Lower leg skin (tissue), 4 donors: ENCODE measurements at regions of chr1 and their contacts with region 1.

Region 1: DNA sequence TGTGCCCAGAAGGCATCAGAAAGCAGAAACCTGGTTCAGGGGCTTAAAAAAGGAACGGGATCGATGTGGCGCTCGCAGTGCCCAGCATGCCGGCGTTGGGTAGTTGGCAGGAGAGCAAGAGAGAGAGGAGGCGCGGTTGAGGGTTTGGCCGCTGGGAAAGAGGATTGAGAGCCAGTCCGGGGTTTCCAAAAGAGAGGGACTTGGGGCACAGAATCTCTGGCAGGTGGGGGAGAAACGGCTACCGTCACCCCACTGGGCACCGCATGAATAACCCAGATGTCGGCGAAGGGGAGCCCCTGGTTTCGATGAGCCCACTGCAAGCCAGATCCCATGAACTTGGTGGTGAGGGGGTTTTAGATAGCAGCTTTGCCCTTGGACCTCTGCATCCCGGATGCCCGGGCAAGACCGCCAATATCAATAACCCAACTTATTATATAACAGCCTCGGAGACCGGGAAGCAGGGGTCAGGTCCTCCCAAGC is 60.4 kb upstream of the ACOT11 start:
- DNase-seq: peak in 1 of 2 donors; percentile 90
- H3K4me3 ChIP-seq: no peak overlapping the region
- CTCF ChIP-seq: no peak
- POLR2A ChIP-seq: no peak

Region 2: GRCh38 chr1:54121482-54122134 is 366.0 kb before region 1 on chr1:
- intact Hi-C with region 1: loop called (anchors 5 kb)
- DNase-seq: peak; percentile 59 to 96
- H3K4me3 ChIP-seq: no peak overlapping the region
- CTCF ChIP-seq: peak in 1 of 3 donors; percentile 36
- POLR2A ChIP-seq: no peak

Region 3: GRCh38 chr1:54407404-54408146 is 80.0 kb before region 1 on chr1:
- intact Hi-C with region 1: loop called (anchors 1 kb)
- DNase-seq: peak; percentile 86 to 89
- H3K4me3 ChIP-seq: peak overlapping the region; percentile 88
- CTCF ChIP-seq: no peak
- POLR2A ChIP-seq: no peak

Region 4: GRCh38 chr1:54888080-54888733 is 400.6 kb after region 1 on chr1:
- intact Hi-C with region 1: no loop called
- DNase-seq: no peak
- H3K4me3 ChIP-seq: no peak overlapping the region
- CTCF ChIP-seq: no peak
- POLR2A ChIP-seq: no peak